ENCODE measurements at regions of chr12 and their contacts with region 1.

Region 1: DNA sequence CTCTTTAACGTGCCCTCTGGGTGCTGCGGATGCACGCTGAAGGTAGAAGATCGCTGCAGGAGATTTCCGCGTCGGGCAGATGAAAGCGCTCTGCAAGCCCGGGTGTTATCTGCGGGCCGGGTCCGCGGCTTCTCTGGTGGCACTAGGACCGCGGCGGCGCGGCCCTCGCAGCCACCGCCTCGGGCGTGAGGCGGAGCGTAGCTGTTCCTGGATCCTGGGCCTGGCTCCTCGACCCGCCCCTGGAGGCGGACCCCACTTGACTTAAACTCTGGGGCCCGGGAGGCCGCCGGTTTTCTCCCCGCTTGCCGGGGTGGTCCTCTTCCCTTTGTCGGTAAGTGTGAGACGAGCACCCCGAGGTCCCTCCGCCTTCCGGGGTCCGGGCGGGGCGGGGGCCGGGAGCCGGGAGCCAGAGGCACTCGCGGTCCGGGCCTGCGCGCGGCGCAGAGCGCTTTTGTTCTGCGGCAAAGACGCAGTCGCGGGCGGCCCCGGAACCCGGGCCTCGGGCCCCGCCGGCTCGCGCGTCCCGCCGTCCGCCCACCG is at the start of gene RESF1:
- DNase-seq: peak; percentile 87
- H3K4me3 Mint-ChIP-seq: peak within 1 kb of the TSS; percentile 92
- H3K27ac Mint-ChIP-seq: peak within 1 kb of the TSS; percentile 95
- H3K4me1 Mint-ChIP-seq: peaks cover 73% of the 10 kb centered on the region
- H3K27me3 Mint-ChIP-seq: no peaks in the 10 kb centered on the region
- total RNA-seq, gene RESF1: 63.0 and 66.2 TPM in 2 replicates

Region 2: GRCh38 chr12:31659087-31659933 is 299.9 kb before region 1 on chr12 and contains the start of gene ETFBKMT:
- intact Hi-C with region 1: loop called (anchors 1 kb)
- DNase-seq: peak; percentile 95
- H3K4me3 Mint-ChIP-seq: peak within 1 kb of the TSS; percentile 94
- H3K27ac Mint-ChIP-seq: peak within 1 kb of the TSS; percentile 97
- H3K4me1 Mint-ChIP-seq: peaks cover 11% of the 10 kb centered on the region
- H3K27me3 Mint-ChIP-seq: no peaks in the 10 kb centered on the region
- total RNA-seq, gene ETFBKMT: 0.62 and 0.69 TPM in 2 replicates

Region 3: DNA sequence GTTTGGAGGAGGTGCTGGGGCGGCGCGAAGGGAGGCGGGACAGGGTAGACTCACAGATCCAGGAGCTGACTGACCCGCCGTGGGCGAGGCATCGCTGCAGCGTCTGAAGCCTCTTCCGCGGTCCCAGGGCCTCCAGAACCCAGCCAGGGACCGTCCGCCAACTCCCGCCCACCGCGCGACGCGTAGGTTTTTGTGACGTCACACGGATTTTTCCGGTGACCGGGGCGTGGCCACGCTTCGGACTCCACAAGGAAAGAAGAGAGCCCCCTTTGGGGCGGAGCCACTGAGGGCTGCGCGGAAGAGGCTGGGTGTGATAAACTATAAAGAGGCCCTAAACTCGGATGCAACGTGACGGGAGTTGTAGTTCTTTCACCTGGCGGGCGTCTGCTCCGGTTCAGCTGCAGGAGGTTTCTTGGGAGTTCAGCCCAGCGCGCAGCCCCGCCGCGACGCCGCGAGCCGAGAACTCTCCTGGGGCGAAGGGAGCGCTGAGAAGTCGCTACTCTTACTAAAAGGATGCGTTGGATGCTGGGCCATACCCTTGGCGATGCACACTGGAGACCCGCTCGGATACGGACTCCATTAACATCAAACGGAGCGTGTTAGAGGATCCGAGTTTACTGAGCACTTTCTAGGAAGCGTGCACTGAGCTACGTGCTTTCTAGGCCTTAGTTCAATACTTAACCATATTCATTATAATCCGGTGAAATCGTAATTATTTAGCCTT is 230.2 kb before region 1 on chr12 and contains the start of gene AMN1:
- intact Hi-C with region 1: loop called (anchors 1 kb)
- DNase-seq: peak; percentile 100
- H3K4me3 Mint-ChIP-seq: peak within 1 kb of the TSS; percentile 98
- H3K27ac Mint-ChIP-seq: peak within 1 kb of the TSS; percentile 99
- H3K4me1 Mint-ChIP-seq: peaks cover 53% of the 10 kb centered on the region
- H3K27me3 Mint-ChIP-seq: no peaks in the 10 kb centered on the region
- total RNA-seq, gene AMN1: 3.1 and 3.4 TPM in 2 replicates

Region 4: DNA sequence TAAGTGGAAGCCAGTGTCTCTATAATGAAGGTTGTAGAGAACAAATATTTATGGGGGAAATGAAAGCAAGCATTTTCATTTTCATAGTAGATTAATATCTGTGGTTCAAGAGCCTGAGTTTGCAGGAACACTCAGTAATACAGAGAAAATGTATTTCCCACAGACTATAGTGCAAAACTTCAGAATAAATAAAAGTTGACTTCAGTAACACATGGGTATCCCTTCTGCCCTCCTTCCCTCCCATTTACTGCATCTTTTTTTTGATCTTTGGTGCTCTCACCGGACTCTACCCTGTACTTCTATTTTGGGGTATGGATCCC is 155.1 kb before region 1 on chr12:
- intact Hi-C with region 1: loop called (anchors 1 kb)
- DNase-seq: no peak
- H3K4me3 Mint-ChIP-seq: peak overlapping the region; percentile 31
- H3K27ac Mint-ChIP-seq: peak overlapping the region; percentile 14
- H3K4me1 Mint-ChIP-seq: peaks cover 40% of the 10 kb centered on the region
- H3K27me3 Mint-ChIP-seq: no peaks in the 10 kb centered on the region

Region 5: GRCh38 chr12:31928246-31929026 is 30.8 kb before region 1 on chr12:
- intact Hi-C with region 1: loop called (anchors 1 kb)
- DNase-seq: peak; percentile 12
- H3K4me3 Mint-ChIP-seq: peak overlapping the region; percentile 77
- H3K27ac Mint-ChIP-seq: peak overlapping the region; percentile 86
- H3K4me1 Mint-ChIP-seq: peaks cover 36% of the 10 kb centered on the region
- H3K27me3 Mint-ChIP-seq: no peaks in the 10 kb centered on the region

Region 6: GRCh38 chr12:32025906-32026305 is 66.7 kb after region 1 on chr12:
- intact Hi-C with region 1: loop called (anchors 2 kb)
- DNase-seq: peak; percentile 55
- H3K4me3 Mint-ChIP-seq: peak overlapping the region; percentile 2
- H3K27ac Mint-ChIP-seq: peak overlapping the region; percentile 62
- H3K4me1 Mint-ChIP-seq: peaks cover 29% of the 10 kb centered on the region
- H3K27me3 Mint-ChIP-seq: no peaks in the 10 kb centered on the region

Region 7: GRCh38 chr12:32106517-32107358 is 147.5 kb after region 1 on chr12 and contains the start of gene BICD1:
- intact Hi-C with region 1: loop called (anchors 2 kb)
- DNase-seq: peak; percentile 76
- H3K4me3 Mint-ChIP-seq: peak within 1 kb of the TSS; percentile 98
- H3K27ac Mint-ChIP-seq: peak within 1 kb of the TSS; percentile 87
- H3K4me1 Mint-ChIP-seq: peaks cover 36% of the 10 kb centered on the region
- H3K27me3 Mint-ChIP-seq: peaks cover 19% of the 10 kb centered on the region
- total RNA-seq, gene BICD1: 20.9 and 22.2 TPM in 2 replicates

Measured in activated T-helper 1 cell treated with anti-CD3 and anti-CD28 coated beads, Interleukin-12 subunit alpha, Interleukin-12 subunit beta, Interleukin-2, Interleukin-4 antibody, amounts not matched to agents 30 ng/mL and 10 ng/mL and 1 ng/mL, durations not matched to agents 14 hours and 24 hours and 36 hours (primary cell).